ENCODE measurements at regions of chr3 and their contacts with region 1.

Region 1: DNA sequence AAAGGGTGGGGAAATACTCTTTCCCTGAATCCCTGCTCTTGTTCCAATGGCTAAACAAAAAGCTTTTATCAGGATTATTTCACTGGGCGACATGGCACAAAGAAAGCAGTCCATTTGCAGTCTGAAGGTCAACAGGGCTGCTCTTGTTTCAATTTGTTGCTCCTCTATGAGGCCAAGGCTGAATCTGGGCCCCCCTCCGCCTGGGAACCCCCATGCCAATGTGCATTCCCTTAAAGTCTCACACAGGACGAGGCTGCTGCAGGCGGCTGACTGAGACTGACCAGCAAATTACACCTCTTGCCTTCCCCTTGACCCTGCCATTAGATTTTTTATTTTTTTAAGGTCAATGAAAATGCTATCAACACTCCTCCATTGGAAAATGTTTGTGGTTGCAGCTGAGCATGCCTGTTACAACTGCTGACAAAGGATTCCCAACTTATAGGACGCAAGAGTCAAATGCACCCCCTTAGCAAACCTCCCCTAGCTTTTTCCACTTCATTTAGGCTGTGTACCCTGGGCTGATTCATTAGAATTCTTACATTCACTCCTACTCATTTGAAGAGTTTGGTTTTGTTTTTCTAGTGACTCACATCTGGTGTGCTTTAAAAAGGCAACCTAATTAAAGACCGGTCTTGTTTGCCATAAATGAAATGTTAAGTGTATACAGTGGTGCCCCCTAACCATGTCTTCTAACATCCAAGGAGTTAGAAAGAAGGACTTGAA is 60.8 kb upstream of the ARHGEF3 start:
- DNase-seq: no peak
- ATAC-seq: peak; percentile 29
- H3K4me3 ChIP-seq: no peak overlapping the region
- H3K4me3 Mint-ChIP-seq: no peak overlapping the region
- H3K27ac ChIP-seq: no peak overlapping the region
- H3K27ac Mint-ChIP-seq: peak overlapping the region; percentile 71
- H3K4me1 ChIP-seq: peaks cover 46% of the 10 kb centered on the region
- H3K4me1 Mint-ChIP-seq: peaks cover 78% of the 10 kb centered on the region
- H3K27me3 ChIP-seq: no peaks in the 10 kb centered on the region
- H3K27me3 Mint-ChIP-seq: no peaks in the 10 kb centered on the region
- CTCF ChIP-seq: no peak

Region 2: GRCh38 chr3:56812754-56813650 is 49.5 kb before region 1 on chr3:
- CTCF ChIA-PET with region 1: no interaction called
- POLR2A ChIA-PET with region 1: no interaction called
- intact Hi-C with region 1: loop called in 1 of 2 experiments (anchors 10 kb)
- DNase-seq: no peak
- ATAC-seq: no peak
- H3K4me3 ChIP-seq: no peak overlapping the region
- H3K4me3 Mint-ChIP-seq: peak overlapping the region; percentile 70
- H3K27ac ChIP-seq: peak overlapping the region; percentile 3 to 69
- H3K27ac Mint-ChIP-seq: peak overlapping the region; percentile 80
- H3K4me1 ChIP-seq: peaks cover 48% of the 10 kb centered on the region
- H3K4me1 Mint-ChIP-seq: peaks cover 84% of the 10 kb centered on the region
- H3K27me3 ChIP-seq: no peaks in the 10 kb centered on the region
- H3K27me3 Mint-ChIP-seq: no peaks in the 10 kb centered on the region
- CTCF ChIP-seq: no peak